ENCODE measurements at regions of chr19 and their contacts with region 1.

Region 1: GRCh38 chr19:11738746-11739620 is at the start of gene ZNF823:
- DNase-seq: peak; percentile 100
- ATAC-seq: peak; percentile 93
- H3K4me3 ChIP-seq: peak within 1 kb of the TSS; percentile 85
- H3K27ac ChIP-seq: peak within 1 kb of the TSS; percentile 75
- H3K4me1 ChIP-seq: peaks cover 20% of the 10 kb centered on the region
- H3K27me3 ChIP-seq: no peaks in the 10 kb centered on the region
- CTCF ChIP-seq: no peak
- total RNA-seq, gene ZNF823: 5.1 and 5.6 TPM in 2 replicates

Region 2: DNA sequence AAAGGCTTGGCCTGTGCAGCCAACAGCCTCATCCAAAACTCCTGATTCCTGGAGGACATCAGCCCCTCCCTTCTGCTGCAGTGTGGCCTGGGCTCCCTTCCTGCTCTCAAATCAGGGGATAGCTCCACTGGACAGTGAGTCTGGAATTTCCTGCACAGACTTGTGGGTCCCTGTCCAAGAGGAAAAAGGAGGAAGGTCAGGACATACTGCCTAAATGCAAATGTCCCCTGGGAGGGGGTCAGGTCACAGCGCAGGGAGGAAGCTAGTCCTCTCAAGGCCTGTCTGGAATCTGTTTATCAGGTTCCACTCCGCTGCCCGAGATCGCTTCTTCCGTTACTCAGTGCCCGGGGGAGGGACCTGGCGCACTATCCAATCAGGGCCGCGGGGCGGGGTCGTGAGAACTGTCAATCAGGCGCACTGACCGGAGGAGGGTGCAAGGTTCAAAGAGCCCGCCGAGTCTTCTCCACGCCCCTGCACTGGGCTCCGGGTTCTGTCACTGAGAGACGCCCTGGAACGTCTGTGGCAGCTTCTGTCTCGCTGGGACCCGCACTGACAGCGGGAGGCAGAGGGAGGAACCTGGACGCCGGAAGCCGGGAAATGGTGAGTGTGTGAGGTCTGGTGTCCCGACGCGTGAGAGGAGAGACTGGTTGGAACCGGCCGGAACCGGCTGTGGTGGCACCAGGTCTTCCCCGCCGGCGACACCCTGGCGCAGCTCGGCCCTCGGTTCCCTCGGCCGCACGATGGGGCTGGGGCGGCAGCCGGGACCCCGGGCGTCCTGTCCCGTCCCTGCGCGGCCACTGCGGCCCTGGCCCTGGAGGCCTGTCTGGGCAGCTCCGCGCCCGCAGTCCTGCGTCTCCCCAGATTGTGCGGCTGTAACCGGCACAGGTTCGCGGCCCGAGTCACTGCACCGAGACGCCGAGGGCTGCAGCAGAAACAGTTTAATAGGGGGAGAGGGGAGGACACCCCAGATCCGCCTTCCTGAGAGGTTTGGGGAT is 27.9 kb after region 1 on chr19 and contains the start of gene ZNF441:
- CTCF ChIA-PET with region 1: no interaction called
- POLR2A ChIA-PET with region 1: interaction called, 6 read pairs
- intact Hi-C with region 1: loop called (anchors 1 kb)
- DNase-seq: peak; percentile 98
- ATAC-seq: peak; percentile 97
- H3K4me3 ChIP-seq: peak within 1 kb of the TSS; percentile 77
- H3K27ac ChIP-seq: peak within 1 kb of the TSS; percentile 49
- H3K4me1 ChIP-seq: peaks cover 8% of the 10 kb centered on the region; the same call in 1 of the 2 replicates
- H3K27me3 ChIP-seq: no peaks in the 10 kb centered on the region
- CTCF ChIP-seq: no peak
- total RNA-seq, gene ZNF441: 6.9 and 8.0 TPM in 2 replicates